Panc1 (cell line): ENCODE measurements at regions of chr1 and their contacts with region 1.

Region 1: DNA sequence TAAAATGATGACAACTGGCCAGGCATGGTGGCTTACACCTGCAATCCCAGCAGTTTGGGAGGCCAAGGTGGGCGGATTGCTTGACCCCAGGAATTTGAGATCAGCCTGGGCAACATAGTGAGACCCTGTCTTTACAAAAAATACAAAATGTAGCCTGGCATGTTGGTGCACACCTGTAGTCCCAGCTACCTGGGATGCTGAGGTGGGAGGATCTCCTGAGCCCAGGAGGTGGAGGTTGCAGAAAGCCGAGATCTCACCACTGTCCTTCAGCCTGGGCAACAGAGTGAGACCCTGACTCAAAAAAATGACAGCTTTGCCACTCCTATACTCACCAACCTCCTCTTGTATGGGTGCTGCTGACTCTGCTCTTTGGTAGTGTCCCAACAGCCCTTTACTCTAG is 18.6 kb downstream of the SYT11 start:
- DNase-seq: no peak
- ATAC-seq: no peak
- H3K4me3 ChIP-seq: no peak overlapping the region
- H3K27ac ChIP-seq: no peak overlapping the region
- H3K4me1 ChIP-seq: no peaks in the 10 kb centered on the region
- H3K27me3 ChIP-seq: no peaks in the 10 kb centered on the region
- CTCF ChIP-seq: no peak

Region 2: GRCh38 chr1:155847823-155848529 is 30.0 kb before region 1 on chr1:
- CTCF ChIA-PET with region 1: no interaction called
- POLR2A ChIA-PET with region 1: interaction called, 19 read pairs
- in situ Hi-C with region 1: no loop called
- intact Hi-C with region 1: no loop called
- DNase-seq: no peak
- ATAC-seq: peak; percentile 27; the same call in 1 of the 2 replicates
- H3K4me3 ChIP-seq: no peak overlapping the region
- H3K27ac ChIP-seq: no peak overlapping the region
- H3K4me1 ChIP-seq: no peaks in the 10 kb centered on the region
- H3K27me3 ChIP-seq: no peaks in the 10 kb centered on the region
- CTCF ChIP-seq: no peak